Ovary (tissue), 10 donors: ENCODE measurements at regions of chr1 and their contacts with region 1.

Region 1: GRCh38 chr1:235513495-235514366 is 9.5 kb upstream of the B3GALNT2 start:
- DNase-seq: peak in 1 of 5 donors; percentile 33
- H3K4me3 ChIP-seq: no peak overlapping the region
- H3K27ac ChIP-seq: no peak overlapping the region
- H3K4me1 ChIP-seq: no peaks in the 10 kb centered on the region
- H3K27me3 ChIP-seq: no peaks in the 10 kb centered on the region
- CTCF ChIP-seq: peak; percentile 73 to 87 (median 84)
- EP300 ChIP-seq: no peak
- POLR2A ChIP-seq: no peak

Region 2: GRCh38 chr1:235783148-235783776 is 269.5 kb after region 1 on chr1:
- intact Hi-C with region 1: loop called in 3 of 4 experiments (anchors 5 to 10 kb)
- DNase-seq: peak in 1 of 5 donors; percentile 36
- H3K4me3 ChIP-seq: no peak overlapping the region
- H3K27ac ChIP-seq: no peak overlapping the region
- H3K4me1 ChIP-seq: no peaks in the 10 kb centered on the region
- H3K27me3 ChIP-seq: no peaks in the 10 kb centered on the region
- CTCF ChIP-seq: peak in 2 of 3 donors; percentile 27 to 35
- EP300 ChIP-seq: no peak
- POLR2A ChIP-seq: no peak

Region 3: DNA sequence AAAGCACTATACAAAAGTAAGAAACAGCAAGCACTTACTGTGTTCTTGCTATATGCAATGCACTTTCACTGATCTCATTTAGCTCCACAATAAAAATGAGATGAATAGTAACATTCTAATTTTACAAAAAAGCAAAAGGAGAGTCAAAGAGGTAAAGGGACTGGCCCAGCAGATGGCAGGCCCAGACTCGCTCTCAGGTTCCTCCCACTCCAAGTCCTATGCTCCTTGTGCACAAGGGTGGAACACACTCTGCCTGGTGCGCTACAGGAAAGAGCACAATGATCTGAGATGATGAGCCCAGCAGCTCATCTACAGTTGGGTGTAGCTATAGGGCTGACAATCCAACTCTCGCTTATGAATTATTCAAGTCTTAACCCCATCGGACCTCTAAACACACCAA is 447.1 kb after region 1 on chr1:
- intact Hi-C with region 1: loop called in 1 of 4 experiments (anchors 10 kb)
- DNase-seq: no peak
- H3K4me3 ChIP-seq: no peak overlapping the region
- H3K27ac ChIP-seq: no peak overlapping the region
- H3K4me1 ChIP-seq: no peaks in the 10 kb centered on the region
- H3K27me3 ChIP-seq: no peaks in the 10 kb centered on the region
- CTCF ChIP-seq: no peak
- EP300 ChIP-seq: no peak
- POLR2A ChIP-seq: no peak